ENCODE measurements at regions of chr1 and their contacts with region 1.

Region 1: DNA sequence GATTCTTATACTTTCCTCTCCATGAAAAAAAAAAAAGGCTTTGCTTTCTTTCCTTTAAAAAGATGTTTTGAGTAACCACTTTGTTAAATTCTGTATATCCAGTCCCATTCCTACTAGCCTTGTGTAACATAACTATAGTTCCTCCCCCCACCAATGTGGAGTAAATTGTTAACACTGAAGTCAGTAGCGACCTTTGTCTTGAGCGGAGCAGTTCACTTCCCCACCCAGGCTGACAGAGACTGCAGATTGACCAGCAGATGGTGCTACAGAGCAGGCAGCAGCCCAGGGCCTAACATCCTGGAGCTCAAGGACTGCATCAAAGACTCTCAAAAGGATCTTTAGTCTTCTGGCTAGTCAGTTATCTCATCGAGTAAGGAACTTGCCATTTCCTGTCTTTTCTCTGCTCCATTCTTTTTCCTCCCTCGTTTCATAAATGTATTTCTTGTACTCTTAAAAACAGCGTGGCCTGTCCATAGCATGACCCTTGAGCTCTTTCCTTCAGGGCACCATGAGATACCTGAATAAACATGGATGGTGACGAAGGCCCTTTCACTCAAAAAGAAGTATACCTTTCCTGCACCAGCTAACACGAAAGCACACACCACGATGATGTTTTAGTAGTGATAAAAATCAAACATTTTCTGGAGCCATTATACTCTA is 503.5 kb upstream of the PKN2 start:
- DNase-seq: peak; percentile 61 to 86 (median 80)
- H3K4me3 ChIP-seq: no peak overlapping the region
- H3K27ac ChIP-seq: no peak overlapping the region
- H3K4me1 ChIP-seq: no peaks in the 10 kb centered on the region
- H3K27me3 ChIP-seq: no peaks in the 10 kb centered on the region

Region 2: DNA sequence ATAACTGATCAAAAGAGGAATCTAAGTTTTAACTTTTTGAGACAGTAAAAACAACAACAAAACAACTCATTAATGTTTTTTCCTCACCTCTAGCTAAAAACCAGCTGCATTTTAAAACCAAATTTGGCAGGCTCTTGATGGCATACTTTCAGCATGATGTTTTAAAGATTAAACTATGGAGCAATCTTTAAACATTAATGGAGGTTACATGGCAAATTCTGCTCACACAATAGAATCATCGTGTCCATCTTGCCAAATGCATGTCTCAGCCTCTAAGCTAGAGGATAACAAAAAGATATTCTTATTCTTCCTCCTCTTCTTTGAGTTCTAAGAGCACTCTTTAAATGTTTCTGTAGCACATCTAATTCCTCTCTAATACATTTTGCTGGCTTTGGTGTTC is 76.3 kb before region 1 on chr1:
- CTCF ChIA-PET with region 1: no interaction called
- POLR2A ChIA-PET with region 1: no interaction called
- DNase-seq: no peak
- H3K4me3 ChIP-seq: no peak overlapping the region
- H3K27ac ChIP-seq: no peak overlapping the region
- H3K4me1 ChIP-seq: no peaks in the 10 kb centered on the region
- H3K27me3 ChIP-seq: no peaks in the 10 kb centered on the region

Region 3: DNA sequence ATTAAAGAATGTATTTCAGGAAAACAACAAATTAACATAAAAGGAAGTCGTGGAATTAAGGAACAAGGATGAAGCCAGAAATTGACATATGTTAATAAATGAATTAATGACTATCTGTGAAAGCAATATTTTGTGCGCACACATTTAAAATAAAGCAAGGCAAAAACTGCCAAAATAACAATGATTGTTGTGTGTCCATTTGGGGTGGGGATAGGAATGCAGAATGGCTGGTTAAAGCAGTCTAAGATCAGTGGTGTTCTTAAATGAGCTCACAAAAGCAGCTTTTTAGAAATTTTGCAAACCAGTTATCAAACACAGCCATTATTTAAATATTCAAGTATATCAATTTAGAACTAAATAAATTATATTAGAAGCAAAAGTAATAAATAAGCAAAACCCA is 12.8 kb after region 1 on chr1:
- CTCF ChIA-PET with region 1: interaction called, 10 read pairs
- POLR2A ChIA-PET with region 1: no interaction called
- DNase-seq: no peak
- H3K4me3 ChIP-seq: no peak overlapping the region
- H3K27ac ChIP-seq: no peak overlapping the region
- H3K4me1 ChIP-seq: no peaks in the 10 kb centered on the region
- H3K27me3 ChIP-seq: no peaks in the 10 kb centered on the region